K562 (cell line): ENCODE measurements at regions of chr19 and their contacts with region 1.

Region 1: GRCh38 chr19:5987077-5987818 is 9.3 kb upstream of the RANBP3 start:
- DNase-seq: peak; percentile 63 to 87 (median 74)
- ATAC-seq: peak; percentile 22
- H3K4me3 ChIP-seq: peak overlapping the region; percentile 22
- H3K27ac ChIP-seq: peak overlapping the region; percentile 48
- H3K4me1 ChIP-seq: peaks cover 44 to 46% of the 10 kb centered on the region in 2 experiments
- H3K27me3 ChIP-seq: no peaks in the 10 kb centered on the region
- CTCF ChIP-seq: peak; percentile 87 to 96 (median 94)
- EP300 ChIP-seq: peak; percentile 32; the same call in 1 of the 2 replicates
- POLR2A ChIP-seq: no peak
- RAD21 ChIP-seq: peak; percentile 69 to 81

Region 2: GRCh38 chr19:5803752-5804515 is 183.3 kb before region 1 on chr19:
- CTCF ChIA-PET with region 1: no interaction called
- POLR2A ChIA-PET with region 1: interaction called, 3 read pairs
- in situ Hi-C with region 1: no loop called
- intact Hi-C with region 1: loop called (anchors 10 kb)
- DNase-seq: peak; percentile 94 to 97 (median 96)
- ATAC-seq: peak; percentile 93
- H3K4me3 ChIP-seq: peak overlapping the region; percentile 30; the same call in 1 of the 2 replicates
- H3K27ac ChIP-seq: peak overlapping the region; percentile 5; the same call in 2 of the 3 replicates
- H3K4me1 ChIP-seq: peaks cover 34 to 76% of the 10 kb centered on the region in 2 experiments
- H3K27me3 ChIP-seq: no peaks in the 10 kb centered on the region
- CTCF ChIP-seq: peak; percentile 98 to 100 (median 99)
- EP300 ChIP-seq: no peak
- POLR2A ChIP-seq: no peak
- RAD21 ChIP-seq: peak; percentile 91 to 96

Region 3: GRCh38 chr19:6048808-6049405 is 61.7 kb after region 1 on chr19:
- CTCF ChIA-PET with region 1: interaction called, 6 read pairs
- POLR2A ChIA-PET with region 1: no interaction called
- in situ Hi-C with region 1: no loop called
- intact Hi-C with region 1: loop called (anchors 1 kb)
- DNase-seq: peak; percentile 83 to 89 (median 85)
- ATAC-seq: peak; percentile 100
- H3K4me3 ChIP-seq: no peak overlapping the region
- H3K27ac ChIP-seq: no peak overlapping the region
- H3K4me1 ChIP-seq: peaks cover 4 to 9% of the 10 kb centered on the region in 2 experiments; a peak in 3 of 5 replicates
- H3K27me3 ChIP-seq: no peaks in the 10 kb centered on the region
- CTCF ChIP-seq: peak; percentile 76 to 93 (median 92)
- EP300 ChIP-seq: no peak
- POLR2A ChIP-seq: no peak
- RAD21 ChIP-seq: peak; percentile 84 to 96